Psoas muscle (tissue), 8 donors: ENCODE measurements at regions of chr1 and their contacts with region 1.

Region 1: GRCh38 chr1:211830330-211831142 is at the start of gene LPGAT1:
- DNase-seq: peak; percentile 81 to 89
- ATAC-seq: peak; percentile 96 to 97 (median 96)
- H3K4me3 ChIP-seq: peak within 1 kb of the TSS; percentile 79
- H3K27ac ChIP-seq: peak within 1 kb of the TSS; percentile 86
- H3K4me1 ChIP-seq: peaks cover 15% of the 10 kb centered on the region
- H3K27me3 ChIP-seq: no peaks in the 10 kb centered on the region
- CTCF ChIP-seq: peak; percentile 67
- total RNA-seq, gene LPGAT1: 19.3 to 26.2 (median 21.7) TPM

Region 2: DNA sequence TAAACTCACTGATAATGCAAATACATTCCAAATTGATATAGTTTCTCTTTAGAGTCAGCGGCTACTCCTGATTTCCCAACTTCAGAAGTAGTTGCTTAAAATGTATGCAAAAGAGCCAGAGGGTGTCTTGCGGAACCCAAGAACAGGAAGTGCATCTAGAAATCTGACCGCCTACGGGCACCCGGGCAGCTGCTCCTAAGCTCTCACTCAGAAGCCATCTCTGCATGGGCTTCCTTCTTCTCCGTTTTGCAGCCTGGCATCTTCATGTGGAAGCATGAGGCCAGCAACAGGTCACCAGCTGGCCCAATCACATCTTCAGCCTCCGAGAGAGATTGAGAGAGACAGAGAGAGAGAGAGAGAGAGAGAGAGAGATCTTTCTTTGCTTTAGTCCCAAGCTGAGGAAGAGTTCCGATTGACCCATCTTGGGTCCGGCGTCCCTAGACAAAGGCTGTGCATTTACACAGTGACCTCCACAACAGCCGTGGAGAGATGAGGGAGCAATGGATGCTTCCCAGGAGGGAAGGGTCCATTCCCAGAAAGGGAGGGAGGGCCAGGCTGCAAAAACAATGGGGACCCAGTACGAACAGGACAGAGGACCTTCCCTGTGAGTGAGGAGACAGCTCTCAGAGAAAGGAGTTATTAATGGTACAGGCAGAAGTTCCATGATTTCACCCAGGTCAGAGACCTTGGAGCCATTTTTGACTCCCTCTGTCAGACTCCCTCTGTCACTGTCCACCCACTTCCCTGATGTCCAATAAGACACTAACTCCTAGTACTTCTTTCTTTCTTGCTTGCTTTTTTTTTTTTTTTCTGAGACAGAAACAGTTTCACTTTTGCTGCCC is 223.4 kb before region 1 on chr1:
- intact Hi-C with region 1: no loop called
- DNase-seq: no peak
- ATAC-seq: peak in 2 of 4 donors; percentile 27 to 53
- H3K4me3 ChIP-seq: no peak overlapping the region
- H3K27ac ChIP-seq: no peak overlapping the region
- H3K4me1 ChIP-seq: no peaks in the 10 kb centered on the region
- H3K27me3 ChIP-seq: no peaks in the 10 kb centered on the region
- CTCF ChIP-seq: no peak

Region 3: GRCh38 chr1:211680752-211681327 is 149.7 kb before region 1 on chr1:
- intact Hi-C with region 1: loop called (anchors 2 to 5 kb)
- DNase-seq: peak; percentile 59 to 81
- ATAC-seq: peak; percentile 84 to 97 (median 92)
- H3K4me3 ChIP-seq: no peak overlapping the region
- H3K27ac ChIP-seq: no peak overlapping the region
- H3K4me1 ChIP-seq: no peaks in the 10 kb centered on the region
- H3K27me3 ChIP-seq: no peaks in the 10 kb centered on the region
- CTCF ChIP-seq: peak; percentile 73

Region 4: GRCh38 chr1:211698161-211699026 is 132.1 kb before region 1 on chr1:
- intact Hi-C with region 1: loop called in 1 of 2 experiments (anchors 5 kb)
- DNase-seq: peak; percentile 68 to 71
- ATAC-seq: peak in 3 of 4 donors; percentile 61 to 70 (median 65)
- H3K4me3 ChIP-seq: no peak overlapping the region
- H3K27ac ChIP-seq: no peak overlapping the region
- H3K4me1 ChIP-seq: no peaks in the 10 kb centered on the region
- H3K27me3 ChIP-seq: no peaks in the 10 kb centered on the region
- CTCF ChIP-seq: peak; percentile 64

Region 5: GRCh38 chr1:212012034-212012740 is 181.7 kb after region 1 on chr1:
- intact Hi-C with region 1: loop called in 1 of 2 experiments (anchors 10 kb)
- DNase-seq: peak; percentile 44 to 59
- ATAC-seq: peak; percentile 79 to 93 (median 90)
- H3K4me3 ChIP-seq: no peak overlapping the region
- H3K27ac ChIP-seq: no peak overlapping the region
- H3K4me1 ChIP-seq: no peaks in the 10 kb centered on the region
- H3K27me3 ChIP-seq: no peaks in the 10 kb centered on the region
- CTCF ChIP-seq: peak; percentile 87